ENCODE measurements at regions of chr17 and their contacts with region 1.

Region 1: DNA sequence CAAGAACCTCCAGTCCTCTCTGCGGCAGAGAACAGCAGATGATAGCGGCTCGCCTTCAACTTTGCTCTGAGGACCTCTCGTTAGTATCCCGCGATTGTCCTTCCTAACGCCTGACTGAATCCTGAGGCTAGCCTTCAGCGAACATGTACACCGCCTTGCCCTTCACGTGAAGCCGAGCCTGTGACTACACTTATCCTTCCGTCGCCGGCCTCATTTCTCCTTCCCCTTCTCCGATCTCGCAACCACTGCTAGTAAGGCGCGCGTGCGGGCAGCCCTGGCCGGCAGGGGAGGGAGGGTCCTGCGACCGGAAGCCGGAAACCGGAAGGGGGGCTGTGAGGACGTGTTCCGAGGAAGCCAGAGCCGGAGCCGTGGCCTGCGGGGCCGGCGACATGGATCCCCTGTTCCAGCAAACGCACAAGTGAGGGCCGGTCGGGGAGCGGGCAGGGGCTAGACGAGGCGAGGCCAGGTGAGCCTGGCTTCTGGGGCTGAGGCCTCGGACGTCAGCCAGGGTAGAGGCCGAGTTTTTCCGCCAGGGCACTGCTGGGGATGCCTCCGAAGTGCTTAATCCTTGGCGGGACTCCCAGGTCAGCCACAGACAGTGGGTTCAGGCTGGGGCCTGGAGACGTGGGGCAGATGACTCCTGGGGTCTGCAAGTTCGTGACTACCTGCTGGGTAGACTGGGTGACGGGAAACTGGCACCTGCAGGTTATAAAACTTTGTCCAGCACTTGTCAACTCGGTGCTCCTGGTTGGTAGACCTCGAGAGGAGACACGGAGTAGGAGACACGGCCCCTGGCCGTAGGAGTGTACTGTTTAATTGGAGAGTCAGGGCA is at the start of gene GOSR2:
- DNase-seq: peak; percentile 94
- ATAC-seq: peak; percentile 99
- total RNA-seq, gene GOSR2: 35.2 TPM

Region 2: DNA sequence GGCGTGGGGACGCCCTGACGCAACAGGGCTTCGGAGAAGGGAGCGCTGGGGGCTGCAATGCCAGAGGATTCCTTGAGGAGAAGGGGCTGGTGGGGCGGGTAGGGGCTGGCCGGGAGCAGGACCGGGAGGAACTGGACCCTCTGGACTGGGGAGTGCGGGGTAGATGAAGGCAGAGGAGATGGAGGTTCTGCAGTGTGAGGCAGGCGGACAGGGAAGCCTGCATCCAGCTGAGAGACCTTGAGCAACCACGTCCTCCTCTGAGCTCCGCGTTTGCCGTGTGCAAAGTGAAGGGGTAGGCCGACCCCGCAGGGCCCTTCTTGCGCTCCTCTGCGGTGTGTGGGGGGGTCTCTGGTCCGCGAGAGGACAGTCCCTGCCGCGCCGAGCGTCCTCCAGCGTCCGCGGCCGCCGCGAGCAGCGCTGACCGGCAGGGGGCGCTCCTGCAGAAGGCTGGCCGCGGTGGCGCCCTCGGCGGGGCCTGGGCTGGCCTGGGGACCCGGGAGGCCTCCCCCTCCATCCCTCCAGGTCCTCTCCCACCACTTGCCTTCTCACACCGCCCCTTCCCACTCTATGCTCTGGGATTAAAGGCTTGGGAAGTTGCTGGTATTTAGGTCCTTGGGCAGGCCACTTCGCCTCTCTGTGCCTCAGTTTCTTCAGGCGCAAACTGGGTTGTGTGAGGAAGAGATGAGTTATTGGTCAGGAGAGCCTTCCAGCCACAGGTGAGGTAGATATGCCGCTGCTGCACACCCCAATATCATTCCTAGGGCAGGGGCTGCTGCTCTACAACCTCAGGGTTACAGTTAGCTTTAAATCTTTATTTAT is 81.2 kb before region 1 on chr17:
- intact Hi-C with region 1: loop called (anchors 10 kb)
- DNase-seq: peak; percentile 50
- ATAC-seq: peak; percentile 66

Region 3: DNA sequence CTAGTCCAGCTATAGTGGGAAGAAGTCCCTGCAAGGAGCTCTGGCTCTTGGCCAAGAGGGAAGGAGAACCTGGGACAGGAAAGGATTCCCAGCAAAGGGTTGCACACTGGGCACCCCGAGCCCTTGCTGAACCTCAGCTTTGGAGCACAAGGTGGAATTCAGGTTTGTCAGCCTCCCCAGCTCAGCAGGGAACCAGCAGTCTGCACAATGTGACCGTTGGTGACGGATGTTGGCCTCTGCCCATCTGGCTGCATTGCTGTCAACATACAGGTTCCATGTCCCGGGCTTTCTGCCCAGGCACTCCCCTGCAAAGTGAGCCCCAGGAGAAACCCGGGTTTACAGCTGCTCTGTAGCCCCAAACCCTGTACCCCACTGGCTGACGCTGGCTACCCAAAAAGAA is 49.3 kb after region 1 on chr17:
- intact Hi-C with region 1: no loop called
- DNase-seq: peak; percentile 75
- ATAC-seq: peak; percentile 90